Prostate gland (tissue), 2 donors: ENCODE measurements at regions of chr13 and their contacts with region 1.

Region 1: DNA sequence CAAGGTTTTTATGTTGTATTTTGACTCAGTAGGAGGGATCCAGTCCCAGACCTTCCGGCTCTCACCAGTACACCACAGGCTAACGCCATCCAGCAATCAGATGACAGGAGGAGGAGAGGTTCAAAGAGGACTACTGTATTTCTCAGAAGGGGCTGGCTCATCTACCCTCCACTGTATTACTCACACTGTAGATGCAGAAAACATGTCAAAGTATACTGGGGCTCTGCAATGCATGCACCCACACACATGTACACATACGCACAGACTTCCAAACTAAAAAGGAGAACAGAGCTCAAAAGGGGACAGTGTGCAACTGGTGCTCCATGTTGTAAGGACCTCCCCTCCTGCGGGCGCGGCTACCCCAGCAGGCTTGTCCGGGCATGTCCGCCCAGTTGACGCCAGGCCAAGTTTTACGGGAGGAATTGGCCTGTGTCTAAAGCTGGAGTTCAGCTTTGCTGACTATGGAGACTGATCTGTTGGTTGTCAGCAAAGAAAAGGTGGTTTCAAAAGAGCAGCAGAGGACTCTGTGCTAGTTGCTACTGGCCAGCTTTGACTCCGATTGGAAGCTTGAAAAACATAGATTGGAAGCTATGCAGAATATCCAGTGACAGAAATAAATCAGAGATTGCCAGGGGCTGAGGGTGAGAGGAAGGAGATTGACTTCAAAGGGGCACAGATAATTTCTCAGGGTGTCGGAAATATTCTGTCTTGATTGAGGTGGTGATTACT is 314.2 kb downstream of the DLEU7 start:
- DNase-seq: peak; percentile 76
- H3K4me3 ChIP-seq: no peak overlapping the region
- H3K27ac ChIP-seq: peak overlapping the region; percentile 8
- H3K4me1 ChIP-seq: peaks cover 4% of the 10 kb centered on the region
- H3K27me3 ChIP-seq: no peaks in the 10 kb centered on the region
- CTCF ChIP-seq: no peak
- POLR2A ChIP-seq: no peak

Region 2: DNA sequence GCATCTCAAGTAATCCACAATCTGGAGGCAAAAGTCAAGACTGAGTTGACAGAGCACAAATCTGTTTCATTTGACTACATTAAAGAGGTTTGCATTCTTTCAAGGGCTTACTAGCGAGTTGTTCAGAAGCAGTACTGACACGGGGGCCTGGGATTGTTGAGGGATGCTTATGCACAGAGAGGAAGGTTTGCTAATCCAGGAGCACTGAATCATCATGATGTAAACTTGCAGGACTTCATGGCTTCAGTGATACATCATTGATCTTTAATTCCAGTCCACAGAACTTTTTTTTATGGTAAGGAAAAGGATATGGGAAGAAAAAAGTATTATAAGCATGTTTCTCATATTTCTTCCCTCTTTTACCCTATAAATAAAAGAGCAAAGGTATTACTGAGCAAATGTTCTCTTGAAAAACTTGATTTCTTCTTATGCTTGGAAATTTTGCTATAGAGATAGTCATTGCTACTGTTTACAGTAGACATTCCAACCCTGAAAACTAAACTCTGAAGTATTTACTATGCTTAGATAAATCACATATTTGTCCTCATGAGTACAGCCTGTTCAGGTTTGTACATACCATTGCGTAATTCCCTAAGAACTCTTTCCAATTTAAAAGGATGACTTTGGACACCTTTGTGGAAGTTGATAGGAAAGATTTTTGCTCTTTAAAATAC is 671.0 kb before region 1 on chr13:
- intact Hi-C with region 1: loop called (anchors 10 kb)
- DNase-seq: peak; percentile 36
- H3K4me3 ChIP-seq: no peak overlapping the region
- H3K27ac ChIP-seq: peak overlapping the region; percentile 50 to 73
- H3K4me1 ChIP-seq: peaks cover 7% of the 10 kb centered on the region
- H3K27me3 ChIP-seq: no peaks in the 10 kb centered on the region
- CTCF ChIP-seq: no peak
- POLR2A ChIP-seq: no peak

Region 3: GRCh38 chr13:49996951-49997895 is 532.1 kb before region 1 on chr13 and contains the start of gene TRIM13:
- intact Hi-C with region 1: loop called (anchors 5 kb)
- DNase-seq: peak; percentile 90
- H3K4me3 ChIP-seq: peak within 1 kb of the TSS; percentile 83 to 93
- H3K27ac ChIP-seq: peak within 1 kb of the TSS; percentile 97 to 99
- H3K4me1 ChIP-seq: peaks cover 5% of the 10 kb centered on the region
- H3K27me3 ChIP-seq: no peaks in the 10 kb centered on the region
- CTCF ChIP-seq: peak; percentile 60 to 83 (median 74)
- POLR2A ChIP-seq: peak; percentile 83
- total RNA-seq, gene TRIM13: 24.4 to 52.4 TPM

Region 4: GRCh38 chr13:50170447-50171037 is 358.8 kb before region 1 on chr13:
- intact Hi-C with region 1: loop called (anchors 5 kb)
- DNase-seq: no peak
- H3K4me3 ChIP-seq: no peak overlapping the region
- H3K27ac ChIP-seq: no peak overlapping the region
- H3K4me1 ChIP-seq: no peaks in the 10 kb centered on the region
- H3K27me3 ChIP-seq: no peaks in the 10 kb centered on the region
- CTCF ChIP-seq: peak in 3 of 4 experiments; percentile 30 to 61 (median 59)
- POLR2A ChIP-seq: no peak

Region 5: DNA sequence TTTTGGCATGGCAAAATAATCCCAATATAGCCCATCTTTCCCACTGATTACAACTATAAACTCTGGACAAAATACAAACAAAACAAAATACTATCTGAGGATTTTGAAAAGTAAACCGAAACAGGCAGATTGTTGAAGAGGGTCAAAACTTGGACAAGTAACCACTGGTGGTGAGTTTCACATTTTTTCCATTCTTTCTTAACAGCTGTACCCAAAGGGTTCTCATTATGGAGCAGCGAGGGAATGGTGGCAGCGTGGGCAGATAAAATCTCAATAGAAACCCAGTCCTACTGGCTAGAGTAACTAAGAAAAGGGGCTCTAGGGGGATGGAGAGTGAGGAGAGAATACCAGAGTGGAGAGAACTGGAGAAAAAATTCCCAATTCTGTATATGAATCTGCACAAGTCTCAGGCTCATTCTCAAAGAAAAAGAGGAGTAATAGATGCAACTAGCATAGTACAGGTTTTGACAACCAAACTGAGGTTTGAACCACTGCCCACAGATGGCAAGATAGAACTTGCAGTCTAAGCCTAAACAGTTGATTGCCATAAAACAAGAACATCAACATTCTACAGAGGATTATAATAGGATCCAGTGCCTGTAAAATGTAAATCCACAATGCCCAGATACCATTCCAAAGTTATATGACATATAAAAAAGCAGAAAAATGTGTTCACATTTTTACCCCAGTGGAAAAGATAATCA is 229.6 kb before region 1 on chr13:
- intact Hi-C with region 1: no loop called
- DNase-seq: no peak
- H3K4me3 ChIP-seq: no peak overlapping the region
- H3K27ac ChIP-seq: no peak overlapping the region
- H3K4me1 ChIP-seq: no peaks in the 10 kb centered on the region
- H3K27me3 ChIP-seq: no peaks in the 10 kb centered on the region
- CTCF ChIP-seq: no peak
- POLR2A ChIP-seq: no peak

Region 6: GRCh38 chr13:50911937-50912795 is 382.8 kb after region 1 on chr13:
- intact Hi-C with region 1: loop called (anchors 2 kb)
- DNase-seq: peak; percentile 78
- H3K4me3 ChIP-seq: no peak overlapping the region
- H3K27ac ChIP-seq: peak overlapping the region in 1 of 2 donors; percentile 9
- H3K4me1 ChIP-seq: no peaks in the 10 kb centered on the region
- H3K27me3 ChIP-seq: no peaks in the 10 kb centered on the region
- CTCF ChIP-seq: peak; percentile 71 to 86 (median 82)
- POLR2A ChIP-seq: no peak